ENCODE measurements at regions of chr6 and their contacts with region 1.

Region 1: GRCh38 chr6:3281631-3282475 is 23.1 kb downstream of the PSMG4 start:
- DNase-seq: no peak
- ATAC-seq: no peak
- H3K4me3 Mint-ChIP-seq: no peak overlapping the region
- H3K27ac Mint-ChIP-seq: no peak overlapping the region
- H3K4me1 Mint-ChIP-seq: peaks cover 3% of the 10 kb centered on the region
- H3K27me3 Mint-ChIP-seq: no peaks in the 10 kb centered on the region
- CTCF ChIP-seq: no peak

Region 2: DNA sequence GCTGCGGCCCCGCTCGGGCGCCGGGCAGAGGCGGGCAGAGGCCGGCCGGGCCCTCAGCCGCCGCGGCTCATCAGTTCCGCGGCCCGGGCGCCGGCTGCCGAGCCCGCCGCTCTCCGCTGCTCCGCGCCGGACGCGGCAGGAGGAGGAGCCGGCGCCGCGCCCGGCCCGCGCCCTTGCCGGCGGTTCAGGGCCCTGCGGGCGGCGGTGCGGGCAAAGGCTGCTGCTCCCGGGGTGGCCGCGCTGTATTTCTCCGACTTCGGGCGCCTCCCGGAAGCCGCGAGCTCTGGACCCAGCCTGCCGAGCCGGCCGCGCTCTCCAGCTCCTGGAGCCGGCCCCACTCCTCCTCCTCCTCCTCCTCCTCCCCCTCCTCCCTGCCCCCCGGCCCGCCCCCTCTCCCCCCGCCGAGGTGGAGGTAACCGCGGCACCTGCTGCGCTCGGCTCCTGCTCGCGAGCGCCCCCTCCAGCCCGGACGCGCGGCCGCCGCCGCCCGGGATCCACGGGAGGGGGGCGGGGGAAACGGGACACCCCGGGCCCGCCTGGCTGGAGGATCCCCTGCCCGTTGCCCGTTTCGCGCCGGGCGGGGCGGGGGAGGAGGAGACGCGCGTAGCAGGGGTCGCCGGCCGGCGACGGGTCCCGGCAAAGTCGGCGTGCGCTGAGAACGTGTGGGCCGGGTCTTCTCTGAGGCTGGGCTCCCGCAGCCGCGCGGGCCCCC is 175.1 kb after region 1 on chr6 and contains the start of gene SLC22A23:
- CTCF ChIA-PET with region 1: interaction called, 3 read pairs
- POLR2A ChIA-PET with region 1: no interaction called
- intact Hi-C with region 1: loop called (anchors 1 kb)
- DNase-seq: peak; percentile 67
- ATAC-seq: peak; percentile 73
- H3K4me3 Mint-ChIP-seq: peak within 1 kb of the TSS; percentile 68
- H3K27ac Mint-ChIP-seq: peak within 1 kb of the TSS; percentile 4
- H3K4me1 Mint-ChIP-seq: peaks cover 5% of the 10 kb centered on the region
- H3K27me3 Mint-ChIP-seq: peaks cover 25% of the 10 kb centered on the region
- CTCF ChIP-seq: no peak
- total RNA-seq, gene SLC22A23: 0.24 and 0.95 TPM in 2 replicates

Region 3: GRCh38 chr6:3732345-3733141 is 450.7 kb after region 1 on chr6:
- CTCF ChIA-PET with region 1: interaction called, 130 read pairs
- POLR2A ChIA-PET with region 1: interaction called, 4 read pairs
- intact Hi-C with region 1: loop called (anchors 1 kb)
- DNase-seq: peak; percentile 54
- ATAC-seq: peak; percentile 61
- H3K4me3 Mint-ChIP-seq: no peak overlapping the region
- H3K27ac Mint-ChIP-seq: no peak overlapping the region
- H3K4me1 Mint-ChIP-seq: peaks cover 2% of the 10 kb centered on the region
- H3K27me3 Mint-ChIP-seq: peaks cover 2% of the 10 kb centered on the region
- CTCF ChIP-seq: no peak

Region 4: DNA sequence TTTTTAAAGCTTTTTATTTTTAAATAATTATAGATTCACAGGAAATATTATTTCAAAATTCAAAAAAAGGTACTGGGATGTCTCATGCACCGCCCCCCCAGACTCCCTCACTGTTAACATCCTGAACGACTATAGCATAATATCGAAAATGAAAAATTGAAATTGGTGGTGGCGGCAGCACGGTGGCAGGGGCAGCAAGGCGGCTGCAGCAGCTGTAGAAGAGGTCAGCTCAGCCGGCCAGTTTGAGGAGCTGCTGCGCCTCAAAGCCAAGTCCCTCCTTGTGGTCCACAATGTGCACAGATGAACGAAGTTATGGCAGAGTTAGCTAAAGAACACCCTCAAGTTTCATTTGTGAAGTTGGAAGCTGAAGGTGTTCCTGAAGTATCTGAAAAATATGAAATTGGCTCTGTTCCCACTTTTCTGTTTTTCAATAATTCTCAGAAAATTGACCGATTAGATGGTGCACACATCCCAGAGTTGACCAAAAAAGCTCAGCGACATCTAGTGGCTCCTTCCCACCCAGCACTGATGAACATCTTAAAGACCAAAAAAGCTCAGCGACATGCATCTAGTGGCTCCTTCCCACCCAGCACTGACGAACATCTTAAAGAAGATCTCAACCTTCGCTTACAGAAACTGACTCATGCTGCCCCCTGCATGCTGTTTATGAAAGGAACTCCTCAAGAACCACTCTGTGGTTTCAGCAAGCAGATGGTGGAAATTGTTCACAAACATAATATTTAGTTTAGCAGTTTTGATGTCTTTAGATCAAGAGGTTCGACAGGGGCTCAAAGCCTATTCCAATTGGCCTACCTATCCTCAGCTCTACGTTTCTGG is 696.2 kb after region 1 on chr6:
- CTCF ChIA-PET with region 1: interaction called, 12 read pairs
- POLR2A ChIA-PET with region 1: no interaction called
- intact Hi-C with region 1: loop called (anchors 1 kb)
- DNase-seq: no peak
- ATAC-seq: peak; percentile 96
- H3K4me3 Mint-ChIP-seq: no peak overlapping the region
- H3K27ac Mint-ChIP-seq: no peak overlapping the region
- H3K4me1 Mint-ChIP-seq: peaks cover 5% of the 10 kb centered on the region
- H3K27me3 Mint-ChIP-seq: peaks cover 4% of the 10 kb centered on the region
- CTCF ChIP-seq: no peak

Region 5: DNA sequence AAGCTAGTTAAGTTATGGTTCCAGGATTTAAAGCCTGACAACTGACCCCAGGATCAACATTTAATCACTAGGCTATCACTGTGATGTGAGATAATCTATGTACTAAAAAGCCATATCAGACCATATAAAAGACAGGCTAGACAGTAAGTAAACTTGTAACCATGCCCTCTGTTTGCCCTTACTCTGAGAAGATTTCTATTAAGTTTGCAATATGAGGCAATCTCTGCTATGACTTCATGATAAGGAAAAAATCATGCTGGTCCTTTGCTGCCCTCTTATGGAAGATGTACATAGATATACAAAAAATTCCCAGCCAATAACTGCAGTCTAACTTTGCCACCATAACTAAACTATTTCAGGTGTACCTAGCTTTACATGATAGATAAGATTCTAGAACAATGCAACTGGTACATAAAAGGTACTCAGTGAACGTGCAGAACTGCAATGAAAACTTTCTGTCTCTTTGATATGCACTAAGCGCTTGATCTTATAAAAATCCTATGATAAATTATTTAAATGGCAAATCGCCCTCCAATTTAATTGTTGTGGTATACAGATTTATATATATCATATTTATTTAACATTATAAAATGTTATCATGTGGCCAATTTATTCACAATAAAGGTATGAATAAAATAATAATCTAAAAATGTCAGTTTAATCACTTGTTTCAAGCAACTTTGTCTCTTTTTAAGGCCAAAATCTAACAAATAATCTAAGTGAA is 726.6 kb after region 1 on chr6:
- CTCF ChIA-PET with region 1: interaction called, 6 read pairs
- POLR2A ChIA-PET with region 1: no interaction called
- intact Hi-C with region 1: loop called (anchors 2 kb)
- DNase-seq: no peak
- ATAC-seq: peak; percentile 49
- H3K4me3 Mint-ChIP-seq: no peak overlapping the region
- H3K27ac Mint-ChIP-seq: no peak overlapping the region
- H3K4me1 Mint-ChIP-seq: peaks cover 25% of the 10 kb centered on the region
- H3K27me3 Mint-ChIP-seq: no peaks in the 10 kb centered on the region
- CTCF ChIP-seq: no peak

Measured in activated B cell treated with CpG ODN at 0.5 μM for 24 hours (primary cell).